A549 (cell line): ENCODE measurements at regions of chr1 and their contacts with region 1.

Region 1: GRCh38 chr1:227437495-227438008 is 119.3 kb upstream of the CDC42BPA start:
- DNase-seq: peak; percentile 70 to 87
- ATAC-seq: peak; percentile 89 to 93
- H3K4me3 ChIP-seq: peak overlapping the region; percentile 35
- H3K27ac ChIP-seq: peak overlapping the region; percentile 60 to 78
- H3K4me1 ChIP-seq: peaks cover 7% of the 10 kb centered on the region
- CTCF ChIP-seq: peak; percentile 92
- EP300 ChIP-seq: no peak
- POLR2A ChIP-seq: no peak
- RAD21 ChIP-seq: peak; percentile 94 to 96

Region 2: GRCh38 chr1:227449051-227449450 is 11.5 kb after region 1 on chr1:
- CTCF ChIA-PET with region 1: interaction called, 31 read pairs
- POLR2A ChIA-PET with region 1: no interaction called
- DNase-seq: peak in 1 of 2 experiments; percentile 57
- ATAC-seq: peak in 1 of 2 experiments; percentile 71; a peak in 3 of 6 replicates
- H3K4me3 ChIP-seq: no peak overlapping the region
- H3K27ac ChIP-seq: no peak overlapping the region
- H3K4me1 ChIP-seq: no peaks in the 10 kb centered on the region
- CTCF ChIP-seq: 0 out of 3 replicates have a peak, but pooled peaks have one; percentile 21
- EP300 ChIP-seq: no peak
- POLR2A ChIP-seq: no peak
- RAD21 ChIP-seq: peak in 1 of 2 experiments; percentile 48; a peak in 2 of 5 replicates